Left ventricle myocardium superior (tissue), 1 donor: ENCODE measurements at regions of chr11 and their contacts with region 1.

Region 1: DNA sequence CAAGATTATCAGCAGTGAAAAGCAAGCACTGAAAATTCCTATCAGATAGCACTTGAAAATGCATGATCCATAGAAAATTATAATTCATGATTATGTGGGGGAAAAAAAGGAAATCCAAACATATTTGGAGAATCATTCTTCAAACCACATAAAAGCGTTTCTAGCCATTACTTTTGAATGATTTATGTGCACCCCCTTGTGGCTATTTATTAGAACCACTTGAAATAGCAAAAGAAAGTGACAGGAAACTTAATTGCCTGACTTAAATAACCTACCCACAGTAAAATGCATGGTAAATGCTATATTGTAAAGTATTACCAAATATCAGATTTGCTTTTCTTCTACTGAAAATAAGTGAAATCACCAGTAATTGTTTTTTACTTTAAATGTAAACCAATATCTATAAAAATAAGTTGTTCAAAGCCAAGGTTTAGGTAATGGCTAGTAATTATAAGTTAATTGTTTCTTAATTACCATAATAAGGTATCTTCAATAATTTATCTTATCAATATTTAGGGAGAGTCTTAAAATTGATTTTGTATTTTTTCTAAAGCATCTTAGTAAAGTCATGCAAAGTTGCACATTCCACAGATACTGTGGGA is 168.5 kb downstream of the ARHGAP42 start:
- DNase-seq: no peak
- ATAC-seq: no peak

Region 2: GRCh38 chr11:100575870-100576705 is 279.5 kb before region 1 on chr11:
- intact Hi-C with region 1: loop called (anchors 5 kb)
- DNase-seq: no peak
- ATAC-seq: peak; percentile 77

Region 3: DNA sequence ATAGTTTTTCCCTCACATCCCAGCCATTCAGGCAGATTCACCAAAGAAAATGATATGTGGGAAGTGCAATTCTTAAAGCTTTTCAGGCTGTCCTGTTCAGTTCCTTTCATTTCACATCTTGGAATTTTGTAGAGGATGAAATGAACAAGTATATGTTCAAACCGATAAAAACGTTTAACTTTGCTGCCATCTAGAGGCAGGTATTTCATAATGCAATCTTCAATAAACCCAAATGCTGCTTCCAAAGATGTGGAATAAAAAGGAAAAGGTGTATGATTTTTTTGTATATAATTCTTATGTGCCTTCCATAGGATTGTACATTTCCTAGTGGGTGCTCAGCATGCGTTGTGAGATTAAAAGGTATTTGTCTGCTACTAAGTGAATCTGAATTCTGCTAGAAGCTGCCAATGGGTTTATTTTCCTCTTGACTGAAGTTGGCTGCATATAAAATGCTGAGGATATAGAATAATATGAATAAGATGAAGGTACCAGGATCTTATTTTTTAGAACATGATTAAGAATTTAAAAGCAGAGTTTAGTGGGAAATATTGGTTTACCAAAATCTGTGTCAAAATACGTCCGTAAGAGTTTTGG is 74.7 kb after region 1 on chr11:
- intact Hi-C with region 1: loop called (anchors 5 kb)
- DNase-seq: no peak
- ATAC-seq: peak; percentile 48

Region 4: GRCh38 chr11:101096036-101096704 is 240.6 kb after region 1 on chr11:
- intact Hi-C with region 1: no loop called
- DNase-seq: peak; percentile 67
- ATAC-seq: peak; percentile 81